ENCODE measurements at regions of chr4 and their contacts with region 1.

Region 1: DNA sequence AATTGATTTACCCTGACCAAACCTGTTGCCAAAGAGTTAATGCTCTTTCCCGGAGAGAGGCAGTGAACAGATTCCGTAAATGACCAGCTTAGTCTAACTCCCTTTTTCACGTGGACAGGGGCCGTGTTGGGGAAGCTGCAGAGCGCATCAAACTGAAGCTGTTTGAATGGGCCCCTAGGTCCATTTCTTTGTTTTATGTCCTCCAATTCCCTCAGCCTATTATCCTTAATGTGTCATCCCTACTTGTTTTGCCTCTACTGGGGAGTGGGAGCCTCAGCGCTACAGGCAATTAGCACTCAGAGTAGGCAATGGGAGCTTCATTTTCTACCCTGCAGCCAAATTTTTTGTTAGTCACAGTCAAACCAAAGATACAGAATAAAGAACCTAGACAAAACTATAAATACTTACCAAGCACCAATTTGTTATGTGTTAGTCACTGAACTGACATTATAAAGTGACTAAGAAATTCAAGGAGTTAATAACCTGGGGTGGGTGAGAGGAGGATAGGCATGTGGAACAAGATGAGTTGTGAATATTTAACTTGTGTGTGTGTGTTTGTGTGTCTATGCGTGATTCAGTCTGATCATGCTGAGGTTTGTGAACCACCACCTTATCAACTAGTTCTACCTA is 417.4 kb downstream of the PACRGL start:
- DNase-seq: peak; percentile 14
- H3K4me3 Mint-ChIP-seq: no peak overlapping the region
- H3K27ac Mint-ChIP-seq: peak overlapping the region; percentile 23
- H3K4me1 Mint-ChIP-seq: peaks cover 32% of the 10 kb centered on the region
- H3K27me3 Mint-ChIP-seq: no peaks in the 10 kb centered on the region
- CTCF ChIP-seq: no peak

Region 2: GRCh38 chr4:21018817-21019216 is 98.8 kb before region 1 on chr4:
- CTCF ChIA-PET with region 1: no interaction called
- POLR2A ChIA-PET with region 1: no interaction called
- intact Hi-C with region 1: no loop called
- DNase-seq: no peak
- H3K4me3 Mint-ChIP-seq: no peak overlapping the region
- H3K27ac Mint-ChIP-seq: no peak overlapping the region
- H3K4me1 Mint-ChIP-seq: peaks cover 4% of the 10 kb centered on the region
- H3K27me3 Mint-ChIP-seq: no peaks in the 10 kb centered on the region
- CTCF ChIP-seq: no peak

Region 3: GRCh38 chr4:21134994-21135393 is 17.3 kb after region 1 on chr4:
- CTCF ChIA-PET with region 1: interaction called, 13 read pairs
- POLR2A ChIA-PET with region 1: no interaction called
- intact Hi-C with region 1: no loop called
- DNase-seq: peak; percentile 54
- H3K4me3 Mint-ChIP-seq: no peak overlapping the region
- H3K27ac Mint-ChIP-seq: no peak overlapping the region
- H3K4me1 Mint-ChIP-seq: no peaks in the 10 kb centered on the region
- H3K27me3 Mint-ChIP-seq: no peaks in the 10 kb centered on the region
- CTCF ChIP-seq: peak; percentile 52